ENCODE measurements at regions of chr11 and their contacts with region 1.

Region 1: GRCh38 chr11:132126973-132127899 is 756.8 kb downstream of the NTM start:
- DNase-seq: no peak
- H3K4me3 ChIP-seq: peak overlapping the region in 2 of 4 experiments; percentile 26 to 50; a peak in 4 of 8 replicates
- H3K27ac ChIP-seq: no peak overlapping the region
- H3K4me1 ChIP-seq: peaks cover 15 to 32% (median 19%) of the 10 kb centered on the region in 4 experiments
- H3K27me3 ChIP-seq: peaks cover 0 to 2% (median 0%) of the 10 kb centered on the region in 4 experiments; a peak in 2 of 7 replicates
- CTCF ChIP-seq: peak; percentile 44 to 83 (median 69)
- EP300 ChIP-seq: no peak
- POLR2A ChIP-seq: no peak
- RAD21 ChIP-seq: peak; percentile 84 to 89

Region 2: GRCh38 chr11:131809203-131809918 is 317.9 kb before region 1 on chr11:
- CTCF ChIA-PET with region 1: no interaction called
- POLR2A ChIA-PET with region 1: no interaction called
- DNase-seq: no peak
- H3K4me3 ChIP-seq: no peak overlapping the region
- H3K27ac ChIP-seq: no peak overlapping the region
- H3K4me1 ChIP-seq: peaks cover 2 to 7% (median 4%) of the 10 kb centered on the region in 4 experiments; a peak in 6 of 7 replicates
- H3K27me3 ChIP-seq: no peaks in the 10 kb centered on the region
- CTCF ChIP-seq: no peak
- EP300 ChIP-seq: no peak
- POLR2A ChIP-seq: no peak
- RAD21 ChIP-seq: no peak

Region 3: DNA sequence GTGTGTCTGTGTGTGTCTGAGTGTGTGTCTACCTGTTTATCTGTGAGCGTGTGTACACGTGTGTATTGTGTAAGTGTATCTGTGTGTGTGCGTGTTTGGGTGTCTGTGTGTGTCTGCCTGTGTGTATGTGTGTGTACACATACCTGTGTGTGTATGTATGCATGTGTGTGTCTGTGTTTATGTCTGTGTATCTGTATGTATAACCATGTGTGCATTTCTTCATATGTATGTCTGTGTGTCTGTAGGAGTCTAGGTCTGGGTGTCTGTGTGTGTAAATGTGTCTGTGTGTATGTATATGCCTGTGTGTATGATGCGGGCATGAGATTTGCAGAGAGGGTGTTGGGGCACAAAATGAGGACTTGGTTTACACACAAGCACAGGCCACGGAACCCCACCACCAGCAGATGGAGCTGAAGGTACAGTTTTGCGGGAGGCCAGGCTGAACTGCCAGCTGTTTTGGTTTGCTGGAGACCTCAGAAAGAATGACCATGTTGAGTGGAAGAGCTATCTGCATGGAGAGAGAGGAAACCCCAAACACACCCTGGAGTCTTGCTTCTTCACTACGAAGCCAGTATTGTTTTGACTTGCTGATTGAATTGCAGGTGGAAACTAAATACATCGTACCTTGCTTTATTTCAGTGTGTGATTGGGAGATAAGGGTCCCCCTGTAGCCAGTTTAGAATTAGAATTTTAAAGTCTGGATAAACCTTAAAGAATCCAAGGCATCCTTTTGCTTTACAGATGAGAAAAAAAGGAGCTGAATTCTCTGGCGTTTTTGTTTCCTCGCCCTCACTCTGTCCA is 259.6 kb before region 1 on chr11:
- CTCF ChIA-PET with region 1: interaction called, 52 read pairs
- POLR2A ChIA-PET with region 1: interaction called, 5 read pairs
- DNase-seq: peak; percentile 68 to 86
- H3K4me3 ChIP-seq: no peak overlapping the region
- H3K27ac ChIP-seq: no peak overlapping the region
- H3K4me1 ChIP-seq: peaks cover 18 to 33% (median 20%) of the 10 kb centered on the region in 4 experiments
- H3K27me3 ChIP-seq: no peaks in the 10 kb centered on the region
- CTCF ChIP-seq: peak; percentile 91 to 98 (median 96)
- EP300 ChIP-seq: no peak
- POLR2A ChIP-seq: no peak
- RAD21 ChIP-seq: peak; percentile 96

Region 4: DNA sequence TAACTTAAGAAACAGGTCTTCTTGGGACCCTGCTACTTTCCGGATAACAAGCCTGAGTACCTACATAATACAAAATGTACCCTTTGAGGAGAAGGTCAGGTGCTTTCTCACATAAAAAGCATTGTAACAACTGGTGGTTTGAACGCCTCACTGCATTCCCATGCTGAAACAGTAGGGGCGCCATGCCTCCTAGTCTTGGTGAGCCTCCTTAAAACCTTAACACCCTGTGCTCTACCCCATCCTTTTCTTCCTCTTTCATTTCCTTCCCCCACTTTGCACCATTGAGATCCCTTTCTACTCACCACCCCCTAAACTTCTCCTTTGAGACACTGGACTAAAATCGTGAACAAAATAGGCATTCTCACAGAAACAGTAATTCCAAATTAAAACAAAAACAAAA is 27.5 kb before region 1 on chr11:
- CTCF ChIA-PET with region 1: interaction called, 42 read pairs
- POLR2A ChIA-PET with region 1: interaction called, 3 read pairs
- DNase-seq: peak in 1 of 2 experiments; percentile 81
- H3K4me3 ChIP-seq: no peak overlapping the region
- H3K27ac ChIP-seq: no peak overlapping the region
- H3K4me1 ChIP-seq: peaks cover 5 to 24% (median 10%) of the 10 kb centered on the region in 4 experiments; a peak in 6 of 7 replicates
- H3K27me3 ChIP-seq: no peaks in the 10 kb centered on the region
- CTCF ChIP-seq: peak; percentile 56 to 90 (median 67)
- EP300 ChIP-seq: no peak
- POLR2A ChIP-seq: no peak
- RAD21 ChIP-seq: peak; percentile 55 to 56

Region 5: GRCh38 chr11:132114185-132114584 is 13.1 kb before region 1 on chr11:
- CTCF ChIA-PET with region 1: interaction called, 51 read pairs
- POLR2A ChIA-PET with region 1: interaction called, 4 read pairs
- DNase-seq: no peak
- H3K4me3 ChIP-seq: no peak overlapping the region
- H3K27ac ChIP-seq: no peak overlapping the region
- H3K4me1 ChIP-seq: peaks cover 2 to 15% (median 12%) of the 10 kb centered on the region in 4 experiments; a peak in 6 of 7 replicates
- H3K27me3 ChIP-seq: no peaks in the 10 kb centered on the region
- CTCF ChIP-seq: peak; percentile 77 to 88 (median 85)
- EP300 ChIP-seq: no peak
- POLR2A ChIP-seq: no peak
- RAD21 ChIP-seq: peak; percentile 72 to 85

Region 6: GRCh38 chr11:132264616-132265015 is 137.4 kb after region 1 on chr11:
- CTCF ChIA-PET with region 1: no interaction called
- POLR2A ChIA-PET with region 1: no interaction called
- DNase-seq: no peak
- H3K4me3 ChIP-seq: no peak overlapping the region
- H3K27ac ChIP-seq: no peak overlapping the region
- H3K4me1 ChIP-seq: no peaks in the 10 kb centered on the region; a peak in 2 of 7 replicates
- H3K27me3 ChIP-seq: no peaks in the 10 kb centered on the region
- CTCF ChIP-seq: no peak
- EP300 ChIP-seq: no peak
- POLR2A ChIP-seq: no peak
- RAD21 ChIP-seq: 0 out of 4 replicates have a peak, but pooled peaks of 1 of the 2 experiments have one; percentile 15

Region 7: GRCh38 chr11:132848336-132848735 is 721.1 kb after region 1 on chr11:
- CTCF ChIA-PET with region 1: no interaction called
- POLR2A ChIA-PET with region 1: no interaction called
- DNase-seq: no peak
- H3K4me3 ChIP-seq: no peak overlapping the region
- H3K27ac ChIP-seq: no peak overlapping the region
- H3K4me1 ChIP-seq: peaks cover 0 to 3% (median 0%) of the 10 kb centered on the region in 4 experiments; a peak in 3 of 7 replicates
- H3K27me3 ChIP-seq: no peaks in the 10 kb centered on the region
- CTCF ChIP-seq: no peak
- EP300 ChIP-seq: no peak
- POLR2A ChIP-seq: no peak
- RAD21 ChIP-seq: no peak